Activated T-helper 1 cell treated with anti-CD3 and anti-CD28 coated beads, Interleukin-12 subunit alpha, Interleukin-12 subunit beta, Interleukin-2, Interleukin-4 antibody, amounts not matched to agents 30 ng/mL and 10 ng/mL and 1 ng/mL, durations not matched to agents 14 hours and 24 hours and 36 hours (primary cell): ENCODE measurements at regions of chr9 and their contacts with region 1.

Region 1: GRCh38 chr9:101458955-101459631 is 23.5 kb upstream of the ALDOB start:
- DNase-seq: no peak
- H3K4me3 Mint-ChIP-seq: no peak overlapping the region
- H3K27ac Mint-ChIP-seq: no peak overlapping the region
- H3K4me1 Mint-ChIP-seq: no peaks in the 10 kb centered on the region
- H3K27me3 Mint-ChIP-seq: peaks cover 2% of the 10 kb centered on the region

Region 2: GRCh38 chr9:101470021-101470420 is 10.9 kb after region 1 on chr9:
- intact Hi-C with region 1: no loop called
- DNase-seq: no peak
- H3K4me3 Mint-ChIP-seq: no peak overlapping the region
- H3K27ac Mint-ChIP-seq: no peak overlapping the region
- H3K4me1 Mint-ChIP-seq: no peaks in the 10 kb centered on the region
- H3K27me3 Mint-ChIP-seq: peaks cover 14% of the 10 kb centered on the region

Region 3: GRCh38 chr9:101566904-101567724 is 108.0 kb after region 1 on chr9:
- intact Hi-C with region 1: loop called (anchors 1 kb)
- DNase-seq: no peak
- H3K4me3 Mint-ChIP-seq: no peak overlapping the region
- H3K27ac Mint-ChIP-seq: no peak overlapping the region
- H3K4me1 Mint-ChIP-seq: peaks cover 23% of the 10 kb centered on the region
- H3K27me3 Mint-ChIP-seq: no peaks in the 10 kb centered on the region